ENCODE measurements at regions of chr16 and their contacts with region 1.

Region 1: GRCh38 chr16:9112166-9112843 is 20.9 kb downstream of the HAPSTR1 start:
- DNase-seq: no peak
- H3K4me3 ChIP-seq: no peak overlapping the region
- H3K27ac ChIP-seq: no peak overlapping the region
- H3K4me1 ChIP-seq: peaks cover 3 to 22% (median 14%) of the 10 kb centered on the region in 4 experiments
- H3K27me3 ChIP-seq: no peaks in the 10 kb centered on the region
- CTCF ChIP-seq: no peak
- EP300 ChIP-seq: no peak
- POLR2A ChIP-seq: peak in 1 of 2 experiments; percentile 53; a peak in 1 of 3 replicates
- RAD21 ChIP-seq: no peak

Region 2: GRCh38 chr16:9123871-9124270 is 11.6 kb after region 1 on chr16:
- CTCF ChIA-PET with region 1: interaction called, 3 read pairs
- POLR2A ChIA-PET with region 1: interaction called, 18 read pairs
- DNase-seq: peak in 1 of 2 experiments; percentile 33
- H3K4me3 ChIP-seq: no peak overlapping the region
- H3K27ac ChIP-seq: no peak overlapping the region; the same call in 1 of the 2 replicates
- H3K4me1 ChIP-seq: peaks cover 0 to 11% (median 7%) of the 10 kb centered on the region in 4 experiments; a peak in 5 of 7 replicates
- H3K27me3 ChIP-seq: no peaks in the 10 kb centered on the region
- CTCF ChIP-seq: no peak
- EP300 ChIP-seq: no peak
- POLR2A ChIP-seq: no peak
- RAD21 ChIP-seq: no peak